ENCODE measurements at regions of chr5 and their contacts with region 1.

Region 1: DNA sequence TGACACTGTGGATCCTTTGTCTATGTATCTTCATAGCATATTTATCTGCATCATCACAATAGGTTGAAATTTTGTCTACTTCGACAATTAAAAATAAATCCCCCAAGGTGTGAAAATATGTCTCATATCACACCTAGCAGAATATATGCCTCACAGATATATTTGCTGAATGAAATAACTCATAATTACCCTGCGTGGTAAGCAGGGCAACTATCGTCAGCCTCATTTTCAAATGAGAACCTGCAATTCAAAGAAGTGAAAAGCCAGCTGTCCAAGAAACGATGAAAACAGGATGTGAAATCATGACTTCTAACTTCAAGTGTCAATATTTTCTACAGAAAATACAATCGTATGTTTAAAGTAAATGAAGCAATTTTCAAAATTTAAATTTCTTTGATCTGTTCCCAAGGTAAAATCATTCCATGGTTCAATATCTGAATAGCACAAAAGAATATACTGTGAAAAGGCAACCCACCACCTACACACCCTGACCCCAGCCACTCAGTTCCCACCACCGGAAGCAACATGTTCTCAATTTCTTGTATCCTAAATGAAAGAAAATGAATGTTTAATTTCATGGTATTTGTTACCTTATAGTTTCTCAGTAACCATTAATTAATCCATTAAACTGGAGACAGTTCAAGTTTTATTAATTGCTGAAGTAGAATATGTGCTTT is 57.1 kb downstream of the TBCA start:
- DNase-seq: peak; percentile 37
- ATAC-seq: peak; percentile 95
- H3K4me3 ChIP-seq: no peak overlapping the region; the same call in 1 of the 2 replicates
- H3K27ac ChIP-seq: peak overlapping the region; percentile 75
- H3K4me1 ChIP-seq: peaks cover 6% of the 10 kb centered on the region
- H3K27me3 ChIP-seq: no peaks in the 10 kb centered on the region
- CTCF ChIP-seq: no peak
- EP300 ChIP-seq: peak; percentile 67 to 73; a peak in 2 of 4 replicates
- POLR2A ChIP-seq: no peak
- RAD21 ChIP-seq: no peak

Region 2: GRCh38 chr5:77734885-77735284 is 15.8 kb after region 1 on chr5:
- CTCF ChIA-PET with region 1: interaction called, 4 read pairs
- POLR2A ChIA-PET with region 1: no interaction called
- RAD21 ChIA-PET with region 1: interaction called, 4 read pairs
- SMC1A ChIA-PET with region 1: interaction called, 17 read pairs
- in situ Hi-C with region 1: no loop called
- intact Hi-C with region 1: no loop called
- DNase-seq: no peak
- ATAC-seq: no peak
- H3K4me3 ChIP-seq: no peak overlapping the region
- H3K27ac ChIP-seq: no peak overlapping the region
- H3K4me1 ChIP-seq: no peaks in the 10 kb centered on the region
- H3K27me3 ChIP-seq: no peaks in the 10 kb centered on the region
- CTCF ChIP-seq: no peak
- EP300 ChIP-seq: no peak
- POLR2A ChIP-seq: no peak
- RAD21 ChIP-seq: no peak

Region 3: GRCh38 chr5:77775790-77776553 is 56.9 kb after region 1 on chr5 and contains the start of gene TBCA:
- CTCF ChIA-PET with region 1: interaction called, 3 read pairs
- POLR2A ChIA-PET with region 1: interaction called, 5 read pairs
- RAD21 ChIA-PET with region 1: interaction called, 5 read pairs
- SMC1A ChIA-PET with region 1: interaction called, 10 read pairs
- in situ Hi-C with region 1: no loop called
- intact Hi-C with region 1: loop called (anchors 5 kb)
- DNase-seq: peak; percentile 78
- ATAC-seq: peak; percentile 88
- H3K4me3 ChIP-seq: peak within 1 kb of the TSS; percentile 89
- H3K27ac ChIP-seq: peak within 1 kb of the TSS; percentile 95
- H3K4me1 ChIP-seq: peaks cover 4% of the 10 kb centered on the region; the same call in 1 of the 2 replicates
- H3K27me3 ChIP-seq: no peaks in the 10 kb centered on the region
- CTCF ChIP-seq: peak in 2 of 3 experiments; percentile 31 to 39; a peak in 3 of 6 replicates
- EP300 ChIP-seq: no peak; a peak in 1 of 4 replicates
- POLR2A ChIP-seq: peak; percentile 86
- RAD21 ChIP-seq: peak; percentile 27; the same call in 1 of the 2 replicates
- polyA plus RNA-seq, gene TBCA: 567 to 647 TPM

Region 4: GRCh38 chr5:77852514-77853352 is 133.7 kb after region 1 on chr5:
- CTCF ChIA-PET with region 1: interaction called, 3 read pairs
- POLR2A ChIA-PET with region 1: no interaction called
- RAD21 ChIA-PET with region 1: interaction called, 4 read pairs
- SMC1A ChIA-PET with region 1: interaction called, 3 read pairs
- in situ Hi-C with region 1: no loop called
- intact Hi-C with region 1: loop called (anchors 10 kb)
- DNase-seq: peak; percentile 80
- ATAC-seq: peak; percentile 94
- H3K4me3 ChIP-seq: peak overlapping the region; percentile 76
- H3K27ac ChIP-seq: peak overlapping the region; percentile 78
- H3K4me1 ChIP-seq: peaks cover 3% of the 10 kb centered on the region; the same call in 1 of the 2 replicates
- H3K27me3 ChIP-seq: no peaks in the 10 kb centered on the region
- CTCF ChIP-seq: no peak
- EP300 ChIP-seq: 0 out of 4 replicates have a peak, but pooled peaks have one; percentile 18 to 30
- POLR2A ChIP-seq: peak; percentile 59
- RAD21 ChIP-seq: no peak; the same call in 1 of the 2 replicates

Measured in GM12878 (cell line).